ENCODE measurements at regions of chr18 and their contacts with region 1.

Region 1: GRCh38 chr18:23812546-23813440 is 123.5 kb downstream of the LAMA3 start:
- DNase-seq: peak in 5 of 9 donors; percentile 21 to 46 (median 41)
- ATAC-seq: peak; percentile 61
- H3K4me3 ChIP-seq: no peak overlapping the region
- H3K4me3 Mint-ChIP-seq: no peak overlapping the region
- H3K27ac ChIP-seq: no peak overlapping the region
- H3K27ac Mint-ChIP-seq: peak overlapping the region in 1 of 9 donors; percentile 45
- H3K4me1 ChIP-seq: peaks cover 6 to 14% of the 10 kb centered on the region in 2 donors
- H3K4me1 Mint-ChIP-seq: peaks cover 4 to 29% (median 27%) of the 10 kb centered on the region in 7 donors
- H3K27me3 ChIP-seq: no peaks in the 10 kb centered on the region
- H3K27me3 Mint-ChIP-seq: peaks cover 0 to 18% (median 0%) of the 10 kb centered on the region in 5 donors

Region 2: GRCh38 chr18:22800551-22800951 is 1012.2 kb before region 1 on chr18:
- CTCF ChIA-PET with region 1: no interaction called
- POLR2A ChIA-PET with region 1: no interaction called
- intact Hi-C with region 1: loop called in 1 of 2 experiments (anchors 1 kb)
- DNase-seq: no peak
- ATAC-seq: no peak
- H3K4me3 ChIP-seq: no peak overlapping the region
- H3K4me3 Mint-ChIP-seq: no peak overlapping the region
- H3K27ac ChIP-seq: no peak overlapping the region
- H3K27ac Mint-ChIP-seq: no peak overlapping the region
- H3K4me1 ChIP-seq: no peaks in the 10 kb centered on the region
- H3K4me1 Mint-ChIP-seq: no peaks in the 10 kb centered on the region
- H3K27me3 ChIP-seq: no peaks in the 10 kb centered on the region
- H3K27me3 Mint-ChIP-seq: peaks cover 0 to 19% (median 0%) of the 10 kb centered on the region in 5 donors

Region 3: GRCh38 chr18:22983175-22983574 is 829.6 kb before region 1 on chr18:
- CTCF ChIA-PET with region 1: no interaction called
- POLR2A ChIA-PET with region 1: no interaction called
- intact Hi-C with region 1: no loop called
- DNase-seq: peak in 6 of 9 donors; percentile 8 to 27 (median 21)
- ATAC-seq: peak; percentile 40
- H3K4me3 ChIP-seq: no peak overlapping the region
- H3K4me3 Mint-ChIP-seq: no peak overlapping the region
- H3K27ac ChIP-seq: no peak overlapping the region
- H3K27ac Mint-ChIP-seq: no peak overlapping the region
- H3K4me1 ChIP-seq: no peaks in the 10 kb centered on the region
- H3K4me1 Mint-ChIP-seq: peaks cover 0 to 8% (median 0%) of the 10 kb centered on the region in 7 donors
- H3K27me3 ChIP-seq: no peaks in the 10 kb centered on the region
- H3K27me3 Mint-ChIP-seq: no peaks in the 10 kb centered on the region

Region 4: DNA sequence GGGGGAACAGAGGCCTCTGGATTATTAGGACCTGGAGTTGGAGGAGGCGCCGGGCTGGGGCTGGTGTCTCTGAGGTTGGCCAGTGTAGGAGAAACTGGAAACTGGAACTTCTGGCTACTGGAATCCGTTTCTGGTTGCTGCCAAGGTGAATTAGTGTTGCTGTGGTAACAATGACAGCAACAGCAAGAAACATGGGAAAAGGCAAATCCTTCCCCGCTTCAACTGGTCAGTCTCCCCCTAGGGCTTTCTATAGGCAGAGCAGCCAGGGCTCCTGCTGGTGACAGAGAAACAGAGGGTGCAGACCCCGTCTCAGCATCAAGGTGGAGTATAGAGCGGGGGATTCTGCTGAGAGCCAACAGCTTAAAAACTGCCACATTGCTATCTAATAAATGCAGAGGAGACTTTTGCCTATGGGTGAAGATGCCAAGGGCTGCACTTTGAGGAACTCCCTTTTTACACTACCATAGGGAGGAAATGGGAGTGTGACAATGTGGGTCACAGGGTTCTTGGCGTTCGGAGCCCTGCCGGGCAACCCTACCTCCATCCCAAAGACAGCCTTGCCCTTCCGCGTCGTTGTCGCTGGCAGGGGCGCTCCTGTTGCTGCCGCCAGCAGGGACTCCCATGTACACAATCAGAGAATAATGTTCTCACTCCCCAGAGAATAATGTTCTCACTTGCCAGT is 758.9 kb before region 1 on chr18:
- CTCF ChIA-PET with region 1: no interaction called
- POLR2A ChIA-PET with region 1: no interaction called
- intact Hi-C with region 1: no loop called
- DNase-seq: no peak
- ATAC-seq: no peak
- H3K4me3 ChIP-seq: no peak overlapping the region
- H3K4me3 Mint-ChIP-seq: no peak overlapping the region
- H3K27ac ChIP-seq: no peak overlapping the region
- H3K27ac Mint-ChIP-seq: peak overlapping the region in 2 of 9 donors; percentile 45 to 74
- H3K4me1 ChIP-seq: peaks cover 12 to 17% of the 10 kb centered on the region in 2 donors
- H3K4me1 Mint-ChIP-seq: peaks cover 17 to 37% (median 25%) of the 10 kb centered on the region in 7 donors
- H3K27me3 ChIP-seq: no peaks in the 10 kb centered on the region
- H3K27me3 Mint-ChIP-seq: peaks cover 0 to 33% (median 0%) of the 10 kb centered on the region in 5 donors

Region 5: DNA sequence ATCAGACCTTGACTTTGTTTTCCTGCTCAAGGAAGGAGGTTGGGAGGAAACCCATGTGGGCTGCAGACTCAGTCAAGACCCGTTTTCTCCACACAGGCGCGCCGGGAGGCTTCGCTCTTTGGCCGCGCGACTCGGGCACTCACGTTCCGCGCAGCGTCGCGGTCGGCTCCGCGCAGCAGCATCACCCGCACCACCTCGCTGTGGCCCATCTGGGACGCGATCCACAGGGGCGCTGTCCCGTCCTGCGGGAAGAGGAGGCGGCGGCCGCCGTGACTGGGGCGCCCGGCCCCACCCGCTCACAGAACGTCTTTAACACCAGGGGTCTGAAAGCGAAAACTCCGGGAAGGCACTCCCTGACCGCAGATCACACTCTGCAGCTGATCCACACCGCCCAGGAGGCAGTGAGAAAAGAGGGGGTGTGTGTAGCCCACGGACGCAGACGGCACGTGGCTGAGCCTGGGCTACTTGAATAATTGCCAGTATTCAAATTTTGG is 193.4 kb before region 1 on chr18:
- CTCF ChIA-PET with region 1: interaction called, 9 read pairs
- POLR2A ChIA-PET with region 1: no interaction called
- intact Hi-C with region 1: loop called (anchors 1 kb)
- DNase-seq: peak in 2 of 9 donors; percentile 10 to 11
- ATAC-seq: peak; percentile 51
- H3K4me3 ChIP-seq: peak overlapping the region; percentile 35
- H3K4me3 Mint-ChIP-seq: peak overlapping the region in 9 of 10 donors; percentile 5 to 75 (median 48)
- H3K27ac ChIP-seq: no peak overlapping the region
- H3K27ac Mint-ChIP-seq: no peak overlapping the region
- H3K4me1 ChIP-seq: peaks cover 0 to 7% of the 10 kb centered on the region in 2 donors
- H3K4me1 Mint-ChIP-seq: peaks cover 0 to 16% (median 6%) of the 10 kb centered on the region in 7 donors
- H3K27me3 ChIP-seq: peaks cover 4 to 14% of the 10 kb centered on the region in 2 donors
- H3K27me3 Mint-ChIP-seq: peaks cover 33 to 54% (median 40%) of the 10 kb centered on the region in 5 donors

Region 6: DNA sequence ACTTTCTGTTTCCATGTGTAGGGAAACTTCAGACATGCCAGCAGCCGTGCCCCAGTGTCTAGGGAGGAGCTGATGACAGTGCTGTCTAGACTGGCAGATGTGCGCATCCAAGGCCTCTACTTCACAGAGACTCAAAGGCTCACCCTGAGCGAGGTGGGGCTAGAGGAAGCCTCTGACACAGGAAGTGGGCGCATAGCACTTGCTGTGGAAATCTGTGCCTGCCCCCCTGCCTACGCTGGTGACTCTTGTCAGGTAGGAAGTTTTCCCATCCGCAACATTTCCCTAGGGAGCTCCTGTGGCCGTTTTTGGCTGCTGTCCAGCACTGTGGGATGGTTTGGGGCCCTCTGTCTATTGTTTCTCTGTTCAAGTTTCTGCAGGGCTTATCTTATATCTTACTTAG is 58.6 kb after region 1 on chr18:
- CTCF ChIA-PET with region 1: no interaction called
- POLR2A ChIA-PET with region 1: no interaction called
- intact Hi-C with region 1: loop called in 1 of 2 experiments (anchors 2 kb)
- DNase-seq: peak; percentile 30 to 86 (median 80)
- ATAC-seq: peak; percentile 99
- H3K4me3 ChIP-seq: no peak overlapping the region
- H3K4me3 Mint-ChIP-seq: peak overlapping the region; percentile 56 to 82 (median 74)
- H3K27ac ChIP-seq: peak overlapping the region; percentile 25
- H3K27ac Mint-ChIP-seq: peak overlapping the region; percentile 26 to 99 (median 95)
- H3K4me1 ChIP-seq: peaks cover 38 to 52% of the 10 kb centered on the region in 2 donors
- H3K4me1 Mint-ChIP-seq: peaks cover 26 to 59% (median 47%) of the 10 kb centered on the region in 7 donors
- H3K27me3 ChIP-seq: no peaks in the 10 kb centered on the region
- H3K27me3 Mint-ChIP-seq: peaks cover 0 to 32% (median 0%) of the 10 kb centered on the region in 5 donors

Region 7: GRCh38 chr18:24051031-24051947 is 238.5 kb after region 1 on chr18:
- CTCF ChIA-PET with region 1: no interaction called
- POLR2A ChIA-PET with region 1: no interaction called
- intact Hi-C with region 1: loop called in 1 of 2 experiments (anchors 5 kb)
- DNase-seq: no peak
- ATAC-seq: no peak
- H3K4me3 ChIP-seq: no peak overlapping the region
- H3K4me3 Mint-ChIP-seq: peak overlapping the region in 7 of 10 donors; percentile 16 to 50 (median 34)
- H3K27ac ChIP-seq: no peak overlapping the region
- H3K27ac Mint-ChIP-seq: peak overlapping the region in 8 of 9 donors; percentile 2 to 83 (median 51)
- H3K4me1 ChIP-seq: peaks cover 53 to 60% of the 10 kb centered on the region in 2 donors
- H3K4me1 Mint-ChIP-seq: peaks cover 49 to 96% (median 85%) of the 10 kb centered on the region in 7 donors
- H3K27me3 ChIP-seq: no peaks in the 10 kb centered on the region
- H3K27me3 Mint-ChIP-seq: no peaks in the 10 kb centered on the region